ENCODE measurements at regions of chr6 and their contacts with region 1.

Region 1: GRCh38 chr6:3929281-3929798 is 80.2 kb downstream of the FAM50B start:
- DNase-seq: peak; percentile 61 to 69
- ATAC-seq: peak in 2 of 4 donors; percentile 6 to 56
- H3K4me3 ChIP-seq: no peak overlapping the region
- H3K27ac ChIP-seq: peak overlapping the region; percentile 84
- H3K4me1 ChIP-seq: peaks cover 37% of the 10 kb centered on the region
- H3K27me3 ChIP-seq: no peaks in the 10 kb centered on the region
- CTCF ChIP-seq: no peak

Region 2: GRCh38 chr6:3797231-3798054 is 131.9 kb before region 1 on chr6:
- intact Hi-C with region 1: no loop called
- DNase-seq: no peak
- ATAC-seq: no peak
- H3K4me3 ChIP-seq: no peak overlapping the region
- H3K27ac ChIP-seq: no peak overlapping the region
- H3K4me1 ChIP-seq: peaks cover 6% of the 10 kb centered on the region
- H3K27me3 ChIP-seq: no peaks in the 10 kb centered on the region
- CTCF ChIP-seq: no peak

Region 3: GRCh38 chr6:3848925-3849605 is 80.3 kb before region 1 on chr6 and contains the start of gene FAM50B:
- intact Hi-C with region 1: loop called (anchors 2 to 5 kb)
- DNase-seq: peak; percentile 93 to 97
- ATAC-seq: peak; percentile 93 to 99 (median 94)
- H3K4me3 ChIP-seq: peak within 1 kb of the TSS; percentile 66
- H3K27ac ChIP-seq: peak within 1 kb of the TSS; percentile 82
- H3K4me1 ChIP-seq: no peaks in the 10 kb centered on the region
- H3K27me3 ChIP-seq: no peaks in the 10 kb centered on the region
- CTCF ChIP-seq: peak; percentile 93
- total RNA-seq, gene FAM50B: 10.8 to 19.6 (median 12.4) TPM